ENCODE measurements at regions of chr13 and their contacts with region 1.

Region 1: DNA sequence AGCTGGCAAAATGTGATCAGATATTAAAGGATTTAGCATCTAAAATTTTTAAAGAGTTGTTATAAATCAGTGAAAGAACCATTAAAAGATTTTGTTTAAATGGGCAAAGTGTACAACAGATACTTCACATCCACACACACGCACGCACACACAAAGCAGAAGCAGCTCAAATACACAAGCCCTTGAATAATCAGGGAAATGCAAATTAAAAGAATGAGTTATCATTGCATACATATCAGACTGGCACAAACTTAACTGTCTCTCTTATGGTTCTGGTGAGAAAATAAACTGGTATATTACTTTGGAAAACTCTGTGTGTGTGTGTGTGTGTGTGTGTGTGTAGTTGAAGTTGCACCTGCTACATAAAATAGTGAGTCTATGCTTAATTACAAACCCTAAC is 59.3 kb downstream of the CRYL1 start:
- DNase-seq: no peak
- H3K4me3 ChIP-seq: no peak overlapping the region
- H3K27ac ChIP-seq: no peak overlapping the region
- H3K4me1 ChIP-seq: no peaks in the 10 kb centered on the region
- H3K27me3 ChIP-seq: no peaks in the 10 kb centered on the region
- CTCF ChIP-seq: no peak

Region 2: DNA sequence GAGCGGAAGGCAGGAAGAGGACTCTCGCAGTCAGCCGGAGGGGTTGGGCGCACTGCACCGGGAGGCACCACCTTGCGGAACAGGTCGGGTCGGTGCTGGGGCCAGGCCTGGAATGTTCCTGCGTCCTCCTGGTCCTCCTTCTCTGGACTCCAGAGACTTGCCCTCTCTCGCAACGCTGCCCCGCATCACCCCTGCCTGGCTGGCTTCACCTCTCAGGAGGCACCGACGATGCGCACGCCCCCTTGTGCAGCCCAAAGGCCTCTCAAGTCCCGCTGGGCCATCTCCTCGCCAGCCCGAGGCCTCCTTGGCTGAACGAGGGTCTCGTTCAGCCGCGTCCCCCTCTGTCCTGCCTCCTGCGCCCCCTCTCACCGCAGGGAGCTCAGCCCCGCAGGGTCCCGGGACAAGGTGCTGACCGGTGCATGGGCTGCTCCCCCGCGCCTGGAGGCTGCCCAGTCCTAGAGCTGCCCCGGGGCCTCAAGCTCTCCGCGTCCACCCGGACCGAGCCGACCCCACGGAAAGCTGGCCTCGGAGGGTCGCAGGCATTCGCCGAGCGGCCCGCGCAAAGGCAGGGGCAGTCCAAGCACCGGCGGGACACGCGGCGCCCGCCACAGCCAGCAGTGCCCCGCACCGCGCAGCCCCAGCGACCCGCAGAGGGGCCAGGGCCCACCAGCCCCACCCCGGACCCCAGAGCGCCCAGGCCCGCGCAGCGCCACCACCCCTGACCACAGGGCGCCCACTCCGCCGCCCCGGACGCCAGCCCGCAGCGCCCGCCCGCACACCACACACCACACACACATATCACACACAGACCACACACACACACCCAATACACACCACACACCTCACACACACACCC is 74.5 kb before region 1 on chr13:
- intact Hi-C with region 1: no loop called
- DNase-seq: no peak
- H3K4me3 ChIP-seq: no peak overlapping the region
- H3K27ac ChIP-seq: no peak overlapping the region
- H3K4me1 ChIP-seq: peaks cover 0 to 7% (median 0%) of the 10 kb centered on the region in 4 donors
- H3K27me3 ChIP-seq: no peaks in the 10 kb centered on the region
- CTCF ChIP-seq: no peak

Region 3: DNA sequence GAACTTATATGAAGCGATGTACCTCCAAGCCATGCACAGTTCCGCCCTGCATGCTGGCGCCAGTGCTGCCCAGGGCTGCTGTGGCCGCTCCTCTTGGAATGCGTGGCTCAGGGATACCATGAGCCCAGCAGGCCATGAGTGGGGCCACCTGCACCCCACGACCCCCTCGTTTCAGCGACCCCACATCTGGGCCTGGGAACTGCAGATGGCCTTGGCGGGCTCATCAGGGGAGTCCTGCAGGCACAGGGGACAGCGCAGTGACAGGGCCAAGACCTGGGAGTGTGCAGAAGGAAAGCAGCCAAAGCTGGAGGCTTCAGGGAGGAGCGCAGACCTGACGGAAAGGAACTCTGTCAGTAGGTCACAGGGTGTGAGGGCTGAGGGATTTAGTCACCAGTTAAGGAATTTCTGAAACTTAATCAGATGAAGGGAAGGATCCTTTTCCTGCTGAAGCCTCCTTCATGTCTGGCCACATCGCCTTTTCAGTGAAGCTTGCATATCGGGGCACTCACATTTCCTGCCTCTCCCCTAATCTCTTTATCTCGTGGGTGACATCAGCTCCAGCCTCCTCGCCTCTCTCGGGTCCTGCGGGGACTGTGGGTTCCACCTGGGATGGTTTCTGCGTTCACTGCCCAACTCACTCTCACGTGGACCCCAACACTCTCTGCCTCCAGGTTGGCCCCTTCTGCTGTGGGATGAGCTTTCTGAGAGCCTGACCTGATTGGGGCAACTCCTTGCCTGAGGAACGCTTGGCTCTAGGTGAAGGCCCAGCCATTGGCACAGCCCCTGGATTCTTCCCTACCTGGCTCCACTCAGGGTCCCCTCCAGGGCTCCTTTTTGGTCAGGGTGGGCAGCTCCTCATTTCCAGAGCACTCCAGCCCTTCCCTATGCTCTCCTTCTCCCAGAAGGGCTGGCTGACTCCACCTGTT is 64.2 kb before region 1 on chr13:
- intact Hi-C with region 1: loop called (anchors 1 kb)
- DNase-seq: no peak
- H3K4me3 ChIP-seq: no peak overlapping the region
- H3K27ac ChIP-seq: no peak overlapping the region
- H3K4me1 ChIP-seq: no peaks in the 10 kb centered on the region
- H3K27me3 ChIP-seq: no peaks in the 10 kb centered on the region
- CTCF ChIP-seq: no peak